HCT116 (cell line): ENCODE measurements at regions of chr16 and their contacts with region 1.

Region 1: DNA sequence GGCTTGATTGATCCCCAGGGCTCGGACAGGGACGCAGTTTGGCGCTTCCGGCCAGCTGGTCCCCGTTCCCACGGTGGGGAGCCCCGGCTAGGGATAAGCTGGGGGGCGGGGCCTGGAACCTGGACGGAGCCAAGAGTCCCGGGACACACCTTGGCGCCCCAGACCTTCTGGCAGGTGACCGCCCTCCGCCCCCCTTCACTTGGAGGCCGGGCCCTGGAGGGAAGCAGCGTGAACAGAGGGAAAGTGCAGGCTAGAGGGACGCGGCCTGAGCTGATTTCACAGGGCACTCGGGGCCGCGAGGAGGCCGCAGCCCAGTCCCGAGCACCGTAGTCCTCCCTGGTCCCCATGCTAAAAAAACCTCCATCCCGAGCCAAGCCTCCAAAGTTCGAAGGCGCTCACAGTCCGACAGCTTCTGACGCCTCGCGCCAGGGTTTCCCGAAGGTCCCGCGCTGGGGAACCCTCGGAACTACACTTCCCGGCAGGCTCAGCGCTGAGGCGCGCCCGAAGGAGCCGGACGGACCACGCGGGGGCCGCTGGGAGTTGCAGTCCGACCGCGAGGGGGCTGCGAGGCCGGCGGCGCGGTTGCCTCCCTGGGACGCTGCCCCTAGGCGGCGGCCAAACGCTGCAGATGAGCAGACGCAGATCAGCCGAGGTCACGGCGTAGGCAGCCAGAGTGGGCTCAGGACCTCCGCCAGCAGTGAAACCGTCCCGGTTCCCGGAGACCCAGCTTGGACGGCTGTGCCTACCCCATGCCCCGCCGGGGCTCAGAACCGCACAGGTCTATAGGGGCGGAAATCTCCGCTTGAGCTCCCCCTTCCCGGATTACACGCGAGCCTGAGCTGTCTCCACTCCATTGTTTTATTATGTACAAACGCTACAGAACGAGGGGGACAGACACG is at the start of gene TBX6:
- DNase-seq: peak; percentile 74
- ATAC-seq: peak; percentile 89
- H3K4me3 ChIP-seq: peak within 1 kb of the TSS; percentile 62 to 68
- H3K27ac ChIP-seq: peak within 1 kb of the TSS; percentile 77
- H3K4me1 ChIP-seq: peaks cover 14 to 62% of the 10 kb centered on the region in 2 experiments
- H3K27me3 ChIP-seq: no peaks in the 10 kb centered on the region
- CTCF ChIP-seq: peak; percentile 44 to 76 (median 63); a peak in 5 of 6 replicates
- POLR2A ChIP-seq: peak; percentile 4
- RAD21 ChIP-seq: peak; percentile 86
- total RNA-seq, gene TBX6: 1.4 TPM

Region 2: GRCh38 chr16:29790183-29790952 is 301.4 kb before region 1 on chr16 and contains the start of gene KIF22:
- CTCF ChIA-PET with region 1: no interaction called
- POLR2A ChIA-PET with region 1: no interaction called
- RAD21 ChIA-PET with region 1: no interaction called
- intact Hi-C with region 1: no loop called
- DNase-seq: peak; percentile 96
- ATAC-seq: peak; percentile 95
- H3K4me3 ChIP-seq: peak within 1 kb of the TSS; percentile 90 to 99
- H3K27ac ChIP-seq: peak within 1 kb of the TSS; percentile 80
- H3K4me1 ChIP-seq: peaks cover 13 to 21% of the 10 kb centered on the region in 2 experiments
- H3K27me3 ChIP-seq: no peaks in the 10 kb centered on the region
- CTCF ChIP-seq: peak; percentile 13 to 66 (median 62); a peak in 5 of 6 replicates
- POLR2A ChIP-seq: peak; percentile 77
- RAD21 ChIP-seq: 0 out of 2 replicates have a peak, but pooled peaks have one; percentile 14
- total RNA-seq, gene KIF22: 155 TPM

Region 3: GRCh38 chr16:30112197-30113030 is 20.7 kb after region 1 on chr16:
- CTCF ChIA-PET with region 1: interaction called, 48 read pairs
- POLR2A ChIA-PET with region 1: interaction called, 3 read pairs
- RAD21 ChIA-PET with region 1: no interaction called
- intact Hi-C with region 1: no loop called
- DNase-seq: no peak
- ATAC-seq: peak; percentile 88
- H3K4me3 ChIP-seq: no peak overlapping the region
- H3K27ac ChIP-seq: no peak overlapping the region
- H3K4me1 ChIP-seq: peaks cover 15 to 43% of the 10 kb centered on the region in 2 experiments
- H3K27me3 ChIP-seq: no peaks in the 10 kb centered on the region
- CTCF ChIP-seq: peak; percentile 48 to 83 (median 81); a peak in 5 of 6 replicates
- POLR2A ChIP-seq: no peak
- RAD21 ChIP-seq: peak; percentile 82

Region 4: DNA sequence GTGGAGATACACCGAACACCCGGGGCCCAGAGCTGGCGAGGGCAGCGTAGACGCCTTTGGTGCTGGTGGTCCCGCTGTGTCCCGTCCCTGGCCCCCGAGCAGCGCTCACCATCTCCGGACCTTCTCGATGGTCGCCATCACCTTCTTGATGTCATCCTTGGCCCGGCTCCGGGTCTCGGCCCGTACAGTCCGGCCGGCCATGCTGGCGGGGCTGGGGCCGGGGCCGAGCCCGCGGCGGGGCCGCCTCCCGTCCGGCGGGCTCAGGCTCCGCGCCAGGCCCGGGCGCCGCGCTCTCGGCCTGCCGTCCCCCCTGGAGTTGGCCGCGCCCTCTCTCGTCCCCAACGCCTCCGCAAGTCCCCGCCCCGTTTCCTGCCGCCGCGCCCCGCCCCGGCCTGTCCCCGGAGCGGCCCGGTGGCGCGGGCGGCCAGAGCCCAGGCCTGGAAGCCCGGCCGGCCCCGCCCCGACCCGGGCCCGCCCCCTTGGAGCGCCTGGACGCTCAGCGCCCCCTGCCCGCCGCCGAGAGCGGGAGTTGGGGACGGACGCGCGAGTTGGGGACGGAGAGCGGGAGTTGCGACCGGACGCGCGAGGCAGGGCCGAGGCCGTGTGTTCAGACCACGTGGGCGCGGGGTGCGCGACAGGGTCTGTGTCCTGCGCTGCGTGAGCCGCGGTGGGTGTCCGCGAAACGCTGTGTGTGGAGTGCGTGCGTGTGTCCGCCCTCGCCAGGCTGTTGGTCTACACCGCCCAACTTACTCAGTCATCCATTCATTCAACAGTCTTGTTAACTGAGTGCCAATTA is 802.2 kb after region 1 on chr16 and contains the start of gene BCL7C:
- CTCF ChIA-PET with region 1: no interaction called
- POLR2A ChIA-PET with region 1: no interaction called
- RAD21 ChIA-PET with region 1: no interaction called
- intact Hi-C with region 1: no loop called
- DNase-seq: peak; percentile 65
- ATAC-seq: peak; percentile 77
- H3K4me3 ChIP-seq: peak within 1 kb of the TSS; percentile 91 to 93
- H3K27ac ChIP-seq: peak within 1 kb of the TSS; percentile 98
- H3K4me1 ChIP-seq: peaks cover 25 to 48% of the 10 kb centered on the region in 2 experiments
- H3K27me3 ChIP-seq: no peaks in the 10 kb centered on the region
- CTCF ChIP-seq: peak in 2 of 3 experiments; percentile 11 to 37; a peak in 2 of 6 replicates
- POLR2A ChIP-seq: peak; percentile 65
- RAD21 ChIP-seq: no peak
- total RNA-seq, gene BCL7C: 44.9 TPM